ENCODE measurements at regions of chr3 and their contacts with region 1.

Region 1: DNA sequence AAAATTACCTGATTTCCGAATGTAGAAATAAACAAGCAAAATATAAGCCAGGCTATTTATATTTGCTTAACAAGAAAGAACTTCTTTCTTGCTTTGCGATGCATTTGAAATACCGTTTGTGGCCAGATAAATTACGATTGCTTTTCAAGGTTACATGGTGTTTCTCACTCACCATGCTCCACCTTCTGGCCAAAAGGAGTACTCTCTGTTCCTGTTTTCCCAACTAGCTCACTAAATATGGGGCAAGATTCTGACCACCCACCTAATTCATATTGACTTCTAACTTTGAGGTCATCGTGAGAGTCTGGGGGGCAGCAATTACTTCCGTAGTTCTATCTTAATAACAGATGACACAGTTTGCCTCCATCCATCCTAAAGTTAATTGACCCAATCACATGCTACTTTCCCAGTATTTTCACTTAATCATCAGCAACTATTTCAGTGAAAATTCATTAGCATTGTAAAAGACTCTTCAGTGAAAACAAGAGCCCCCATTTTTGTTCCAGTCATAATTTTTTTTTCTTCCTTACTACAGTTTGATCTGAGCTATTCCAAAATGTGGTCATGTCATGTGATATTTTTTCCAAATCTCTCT is 25.9 kb downstream of the ACP3 start:
- DNase-seq: no peak
- H3K4me3 ChIP-seq: no peak overlapping the region
- H3K27ac ChIP-seq: no peak overlapping the region
- H3K4me1 ChIP-seq: peaks cover 0 to 13% (median 0%) of the 10 kb centered on the region in 4 donors
- H3K27me3 ChIP-seq: no peaks in the 10 kb centered on the region
- CTCF ChIP-seq: peak; percentile 72 to 76 (median 75)
- EP300 ChIP-seq: no peak
- POLR2A ChIP-seq: no peak

Region 2: DNA sequence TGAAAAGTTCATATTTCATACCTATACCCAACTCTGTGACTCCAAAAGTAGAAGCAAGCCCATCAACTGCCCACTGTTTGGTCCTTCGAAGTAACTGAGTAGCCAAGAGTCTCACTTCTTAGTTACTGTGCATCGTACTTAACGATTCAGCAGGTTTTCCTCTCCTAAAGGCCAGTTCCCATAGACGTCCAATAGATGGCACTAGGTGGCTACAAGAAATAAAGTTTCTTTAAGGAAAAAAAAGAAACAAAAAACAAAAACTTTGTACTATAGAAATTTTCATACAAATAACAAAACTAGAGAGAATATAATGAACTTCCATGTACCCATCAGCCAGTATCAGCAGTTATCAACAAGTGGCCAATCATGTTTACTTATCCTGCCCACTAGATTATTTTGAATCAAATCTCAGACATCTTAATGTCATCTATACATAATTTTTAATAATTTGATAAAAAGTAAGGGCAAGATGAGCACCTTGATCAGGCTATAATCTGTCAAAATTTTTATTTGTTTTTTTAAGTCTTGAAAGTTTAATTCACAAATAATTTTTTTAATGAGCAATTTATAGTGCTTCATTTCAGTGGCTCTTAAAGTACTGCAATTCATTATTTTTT is 89.7 kb before region 1 on chr3:
- intact Hi-C with region 1: loop called (anchors 5 kb)
- DNase-seq: no peak
- H3K4me3 ChIP-seq: no peak overlapping the region
- H3K27ac ChIP-seq: no peak overlapping the region
- H3K4me1 ChIP-seq: no peaks in the 10 kb centered on the region
- H3K27me3 ChIP-seq: no peaks in the 10 kb centered on the region
- CTCF ChIP-seq: peak; percentile 50 to 67 (median 56)
- EP300 ChIP-seq: no peak
- POLR2A ChIP-seq: no peak

Measured in esophagus muscularis mucosa (tissue), 4 donors.